Activated naive CD4-positive, alpha-beta T cell treated with anti-CD3 and anti-CD28 coated beads for 36 hours (primary cell): ENCODE measurements at regions of chr3 and their contacts with region 1.

Region 1: GRCh38 chr3:89107461-89108290 is at the start of gene EPHA3:
- DNase-seq: peak; percentile 69
- H3K4me3 Mint-ChIP-seq: peak within 1 kb of the TSS; percentile 64
- H3K27ac Mint-ChIP-seq: no peak within 1 kb of the TSS
- H3K4me1 Mint-ChIP-seq: peaks cover 12% of the 10 kb centered on the region
- H3K27me3 Mint-ChIP-seq: peaks cover 23% of the 10 kb centered on the region
- total RNA-seq, gene EPHA3: not detected

Region 2: DNA sequence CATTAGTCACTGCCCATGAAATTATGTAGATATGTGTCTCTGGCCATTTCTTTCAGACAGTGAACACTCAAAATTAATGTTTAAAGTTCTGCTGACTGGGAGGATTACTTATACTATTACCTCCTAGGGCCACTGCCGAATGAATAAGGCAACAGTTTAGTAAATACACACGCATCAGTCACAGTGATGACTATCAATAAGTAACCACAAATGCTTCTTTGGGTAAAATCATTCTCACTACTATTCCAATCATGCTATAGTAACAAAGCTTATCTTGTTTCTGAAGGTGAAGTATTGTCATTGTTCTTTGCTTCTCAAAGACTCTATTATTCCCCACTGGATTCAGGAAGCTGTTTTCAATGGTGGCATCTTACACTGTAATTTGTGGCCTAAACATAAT is 478.6 kb after region 1 on chr3:
- CTCF ChIA-PET with region 1: no interaction called
- intact Hi-C with region 1: no loop called
- DNase-seq: no peak
- H3K4me3 Mint-ChIP-seq: no peak overlapping the region
- H3K27ac Mint-ChIP-seq: no peak overlapping the region
- H3K4me1 Mint-ChIP-seq: no peaks in the 10 kb centered on the region
- H3K27me3 Mint-ChIP-seq: no peaks in the 10 kb centered on the region

Region 3: DNA sequence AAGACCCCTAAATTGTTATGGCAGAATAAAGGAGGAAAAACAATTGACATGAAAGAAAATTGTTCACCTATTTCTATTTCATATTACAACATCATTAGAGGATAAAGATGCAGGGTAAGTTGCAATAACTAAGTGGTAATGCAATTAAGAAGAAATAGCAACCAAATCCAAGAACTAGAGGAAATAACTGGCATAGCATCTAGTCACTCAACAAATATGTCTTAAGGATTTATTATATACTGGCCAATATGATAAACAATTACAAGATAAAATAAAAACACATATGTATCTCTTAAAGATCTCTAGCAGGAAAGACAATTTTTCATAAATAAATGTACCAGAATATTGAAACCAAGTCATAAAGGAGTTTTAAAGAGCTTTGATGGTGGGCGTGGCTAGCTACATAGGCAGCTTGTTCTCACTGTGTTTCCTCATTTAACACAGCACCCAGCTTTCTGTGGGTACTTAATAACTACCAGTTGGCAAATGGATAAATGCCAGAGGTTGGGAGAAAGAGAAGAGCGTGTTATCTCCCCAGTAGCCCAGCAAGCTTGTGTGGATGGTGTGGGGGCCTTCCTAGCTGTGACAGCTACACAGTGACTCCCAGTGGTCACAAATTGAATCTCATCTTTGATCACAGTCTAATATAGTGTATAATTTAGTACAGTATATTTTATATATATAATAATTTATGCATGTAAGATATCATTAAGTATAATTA is 983.7 kb after region 1 on chr3:
- CTCF ChIA-PET with region 1: no interaction called
- intact Hi-C with region 1: loop called (anchors 10 kb)
- DNase-seq: no peak
- H3K4me3 Mint-ChIP-seq: no peak overlapping the region
- H3K27ac Mint-ChIP-seq: no peak overlapping the region
- H3K4me1 Mint-ChIP-seq: no peaks in the 10 kb centered on the region
- H3K27me3 Mint-ChIP-seq: no peaks in the 10 kb centered on the region

Region 4: DNA sequence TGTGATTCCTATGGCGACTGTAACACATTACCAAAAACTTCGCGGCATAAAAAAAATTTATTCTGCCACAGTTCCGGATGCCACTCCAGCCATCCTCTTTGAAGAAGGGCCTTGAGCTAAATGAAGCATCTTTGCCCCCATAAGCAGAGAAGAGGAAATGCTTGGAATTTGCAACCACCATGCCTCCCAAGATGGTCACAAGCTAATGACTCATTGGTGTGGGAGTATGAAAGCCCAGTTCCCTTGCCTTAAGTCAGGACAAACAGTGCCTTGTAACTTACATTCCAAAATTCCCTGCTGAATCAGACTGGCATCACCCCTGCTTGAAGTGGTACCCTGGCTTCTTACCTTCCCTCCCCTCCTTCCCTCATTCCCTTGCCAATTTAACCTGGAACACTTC is 1077.2 kb after region 1 on chr3:
- CTCF ChIA-PET with region 1: no interaction called
- intact Hi-C with region 1: loop called (anchors 10 kb)
- DNase-seq: no peak
- H3K4me3 Mint-ChIP-seq: no peak overlapping the region
- H3K27ac Mint-ChIP-seq: no peak overlapping the region
- H3K4me1 Mint-ChIP-seq: no peaks in the 10 kb centered on the region
- H3K27me3 Mint-ChIP-seq: no peaks in the 10 kb centered on the region